ENCODE measurements at regions of chr2 and their contacts with region 1.

Region 1: DNA sequence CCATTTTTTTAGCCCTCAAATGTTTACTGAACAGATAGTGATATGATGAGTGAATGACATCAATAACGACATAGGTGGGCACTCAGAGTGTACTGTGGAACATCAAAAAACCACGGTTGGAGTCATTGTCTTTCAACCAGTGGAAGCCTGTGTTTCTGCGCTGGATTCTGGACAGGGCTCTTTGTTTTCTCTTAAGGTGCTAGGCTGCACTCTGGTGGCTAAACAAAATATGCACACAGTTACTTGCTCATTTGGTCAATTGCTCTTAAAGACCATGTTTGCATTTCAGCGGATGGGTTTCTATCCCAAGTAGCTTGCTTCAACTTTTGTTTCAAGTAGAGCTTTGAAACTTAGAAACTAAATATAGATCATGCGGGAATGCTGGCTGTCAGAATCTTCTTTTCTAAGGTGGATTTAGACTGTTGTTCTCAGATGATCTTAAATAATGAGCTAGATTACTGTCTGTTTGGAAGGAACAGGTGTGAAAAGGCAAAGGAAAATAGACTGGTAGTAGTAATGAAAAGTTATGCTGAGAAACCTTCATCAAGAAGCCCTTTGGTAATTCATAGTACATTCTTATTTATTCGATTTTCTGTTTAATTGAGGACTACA is 48.5 kb upstream of the LYPD6B start:
- DNase-seq: peak; percentile 87
- H3K4me3 ChIP-seq: no peak overlapping the region
- H3K27ac ChIP-seq: no peak overlapping the region
- H3K4me1 ChIP-seq: no peaks in the 10 kb centered on the region; the same call in 1 of the 2 replicates
- H3K27me3 ChIP-seq: peaks cover 8% of the 10 kb centered on the region; the same call in 1 of the 2 replicates

Region 2: DNA sequence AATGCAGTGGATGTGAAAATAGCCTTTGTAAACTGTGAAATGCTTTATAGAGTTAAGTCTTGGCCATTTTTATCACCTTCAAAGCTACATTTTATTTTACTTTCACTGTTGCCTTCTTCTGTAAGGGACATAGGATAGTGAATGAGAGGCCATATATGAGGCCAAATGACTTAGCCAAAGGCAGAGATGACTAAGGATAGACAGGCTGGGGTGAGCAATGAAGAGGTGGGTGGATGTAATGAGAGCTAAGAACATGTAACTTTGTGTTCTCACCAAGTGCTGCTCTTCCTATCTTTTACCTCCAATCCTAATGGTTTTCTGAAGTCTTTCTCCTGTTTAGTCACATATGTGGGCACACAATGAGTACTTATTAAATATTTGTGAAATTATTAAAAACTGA is 867.2 kb before region 1 on chr2:
- in situ Hi-C with region 1: no loop called
- DNase-seq: peak; percentile 87
- H3K4me3 ChIP-seq: no peak overlapping the region
- H3K27ac ChIP-seq: peak overlapping the region; percentile 59
- H3K4me1 ChIP-seq: peaks cover 8% of the 10 kb centered on the region
- H3K27me3 ChIP-seq: no peaks in the 10 kb centered on the region

Region 3: DNA sequence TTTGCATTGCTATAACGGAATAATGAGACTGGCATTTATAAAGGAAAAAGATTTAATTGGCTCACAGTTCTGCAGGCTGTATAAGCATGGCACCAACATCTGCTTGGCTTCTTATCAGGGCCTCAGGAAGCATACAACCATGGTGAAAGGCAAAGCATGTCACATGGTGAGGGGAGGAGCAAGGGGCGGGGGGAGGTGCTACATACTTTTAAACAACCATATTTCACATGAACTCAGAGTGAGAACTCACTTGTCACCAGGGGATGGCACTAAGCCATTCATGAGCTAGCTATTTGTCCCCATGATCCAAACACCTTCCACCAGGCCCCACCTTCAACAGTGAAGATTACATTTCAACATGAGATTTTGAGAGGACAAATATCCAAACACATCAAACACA is 780.4 kb before region 1 on chr2:
- in situ Hi-C with region 1: no loop called
- DNase-seq: no peak
- H3K4me3 ChIP-seq: no peak overlapping the region
- H3K27ac ChIP-seq: no peak overlapping the region
- H3K4me1 ChIP-seq: no peaks in the 10 kb centered on the region
- H3K27me3 ChIP-seq: no peaks in the 10 kb centered on the region

Region 4: GRCh38 chr2:148524519-148524919 is 465.5 kb before region 1 on chr2:
- in situ Hi-C with region 1: loop called (anchors 10 kb)
- DNase-seq: no peak
- H3K4me3 ChIP-seq: no peak overlapping the region
- H3K27ac ChIP-seq: no peak overlapping the region
- H3K4me1 ChIP-seq: no peaks in the 10 kb centered on the region
- H3K27me3 ChIP-seq: no peaks in the 10 kb centered on the region

Region 5: GRCh38 chr2:149661844-149662243 is 671.9 kb after region 1 on chr2:
- in situ Hi-C with region 1: no loop called
- DNase-seq: peak; percentile 70
- H3K4me3 ChIP-seq: no peak overlapping the region
- H3K27ac ChIP-seq: no peak overlapping the region
- H3K4me1 ChIP-seq: peaks cover 9% of the 10 kb centered on the region
- H3K27me3 ChIP-seq: no peaks in the 10 kb centered on the region

Measured in GM23248 (cell line).